ENCODE measurements at regions of chr2 and their contacts with region 1.

Region 1: GRCh38 chr2:168968342-168968741 is 62.8 kb downstream of the ABCB11 start:
- DNase-seq: no peak
- ATAC-seq: no peak

Region 2: DNA sequence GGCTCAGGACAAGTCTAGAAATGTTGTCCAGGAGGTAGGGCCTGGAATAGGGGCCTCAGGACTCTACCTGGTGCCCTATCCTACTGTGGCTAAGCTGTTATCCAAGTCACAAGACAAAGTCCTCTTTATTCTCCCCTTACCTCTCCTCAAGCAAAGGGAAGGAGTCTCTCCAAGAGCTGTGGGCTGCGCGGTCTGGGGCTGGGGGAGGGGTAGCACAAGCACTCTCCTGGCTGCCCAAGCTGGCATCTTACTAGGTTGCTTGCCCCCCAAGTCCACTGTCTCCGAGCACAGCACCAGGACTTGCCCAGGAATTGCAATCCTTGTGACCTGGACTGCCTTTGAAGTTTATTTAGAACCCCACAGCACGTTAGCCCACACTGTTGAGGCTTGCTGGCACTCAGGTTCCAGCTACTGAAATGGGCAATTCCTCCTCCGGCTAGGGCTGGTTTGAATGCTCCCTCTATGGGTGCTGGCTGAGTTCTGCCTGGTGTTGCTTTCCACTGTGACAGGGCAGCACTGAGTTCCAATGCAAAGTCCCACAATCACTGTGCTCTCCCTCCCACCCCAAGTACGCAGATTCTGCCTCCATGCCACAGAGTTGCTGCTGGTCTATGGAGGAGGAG is 119.5 kb after region 1 on chr2:
- intact Hi-C with region 1: loop called in 1 of 2 experiments (anchors 5 kb)
- DNase-seq: no peak
- ATAC-seq: peak; percentile 18 to 70

Region 3: DNA sequence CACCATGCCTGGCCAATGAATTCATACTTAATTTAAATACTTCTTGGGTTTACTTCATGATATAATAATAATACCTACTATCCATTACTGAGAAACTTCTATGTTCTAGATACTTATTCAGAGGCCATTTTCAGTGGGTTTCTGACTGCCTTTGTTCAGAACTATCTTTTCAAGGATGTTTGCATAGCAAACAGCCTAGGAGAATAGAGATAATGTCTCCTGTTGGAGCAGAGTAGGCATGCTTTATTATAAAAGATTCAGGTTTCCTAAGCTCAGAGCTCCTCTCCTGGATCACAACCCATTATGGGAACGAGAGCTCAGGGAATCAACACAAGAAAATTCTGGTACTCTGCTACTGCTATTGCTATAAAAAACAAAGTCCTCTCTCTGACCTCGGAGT is 594.2 kb after region 1 on chr2:
- intact Hi-C with region 1: no loop called
- DNase-seq: no peak
- ATAC-seq: no peak

Measured in left cardiac atrium (tissue), 4 donors.